ENCODE measurements at regions of chr1 and their contacts with region 1.

Region 1: GRCh38 chr1:207321079-207321789 is at the start of gene CD55:
- DNase-seq: peak; percentile 100
- ATAC-seq: peak; percentile 86
- H3K4me3 ChIP-seq: peak within 1 kb of the TSS; percentile 77
- H3K27ac ChIP-seq: peak within 1 kb of the TSS; percentile 88
- H3K4me1 ChIP-seq: peaks cover 41% of the 10 kb centered on the region
- H3K27me3 ChIP-seq: no peaks in the 10 kb centered on the region
- CTCF ChIP-seq: peak; percentile 72
- total RNA-seq, gene CD55: 101 and 108 TPM in 2 replicates

Region 2: DNA sequence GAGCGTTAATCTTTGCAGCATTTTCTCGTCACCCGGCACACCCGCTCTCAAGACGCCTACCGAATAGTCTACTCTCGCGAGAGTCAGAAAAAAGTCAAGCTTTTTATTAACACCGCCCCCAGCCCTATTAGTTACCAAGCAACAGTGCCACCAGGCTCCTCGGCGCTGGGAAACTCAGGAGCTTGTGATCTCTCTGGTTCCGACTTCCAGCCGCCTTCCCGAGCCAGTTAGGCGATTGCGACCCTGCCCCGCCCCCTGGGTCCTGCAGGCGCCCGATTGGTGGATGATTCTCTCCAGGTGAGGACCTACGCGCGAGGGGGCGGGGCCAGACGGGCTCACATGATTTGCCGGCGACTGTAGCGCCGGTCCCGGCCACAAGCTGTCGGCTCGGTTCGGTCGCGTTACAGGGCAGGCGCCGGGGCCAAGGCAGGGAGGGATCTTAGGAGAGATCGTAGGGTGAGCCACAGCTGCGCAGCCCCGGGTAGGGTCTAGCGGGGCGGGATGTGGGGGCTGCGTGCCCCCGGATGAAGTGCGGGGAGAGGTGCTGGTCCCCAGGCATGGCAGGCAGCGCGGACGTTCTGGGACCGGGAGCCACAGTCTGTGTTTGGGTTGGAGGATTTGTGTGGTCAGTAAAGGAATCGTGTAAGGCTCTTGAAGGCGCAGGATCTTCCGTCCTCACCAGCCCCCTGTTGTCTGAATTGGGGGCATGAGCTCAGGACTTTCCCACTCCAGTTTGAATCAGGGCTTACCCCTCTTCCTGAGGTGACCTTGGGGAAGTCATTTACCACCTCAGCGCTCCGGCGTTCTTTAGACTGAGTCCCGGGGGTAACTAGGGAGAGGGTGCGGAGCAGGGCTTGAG is 268.1 kb before region 1 on chr1 and contains the start of gene PFKFB2:
- CTCF ChIA-PET with region 1: no interaction called
- POLR2A ChIA-PET with region 1: interaction called, 11 read pairs
- intact Hi-C with region 1: no loop called
- DNase-seq: peak; percentile 100
- ATAC-seq: peak; percentile 81
- H3K4me3 ChIP-seq: peak within 1 kb of the TSS; percentile 78
- H3K27ac ChIP-seq: peak within 1 kb of the TSS; percentile 95
- H3K4me1 ChIP-seq: peaks cover 55% of the 10 kb centered on the region
- H3K27me3 ChIP-seq: no peaks in the 10 kb centered on the region
- CTCF ChIP-seq: peak; percentile 35; the same call in 1 of the 2 replicates
- total RNA-seq, gene PFKFB2: 37.5 and 48.6 TPM in 2 replicates

Region 3: DNA sequence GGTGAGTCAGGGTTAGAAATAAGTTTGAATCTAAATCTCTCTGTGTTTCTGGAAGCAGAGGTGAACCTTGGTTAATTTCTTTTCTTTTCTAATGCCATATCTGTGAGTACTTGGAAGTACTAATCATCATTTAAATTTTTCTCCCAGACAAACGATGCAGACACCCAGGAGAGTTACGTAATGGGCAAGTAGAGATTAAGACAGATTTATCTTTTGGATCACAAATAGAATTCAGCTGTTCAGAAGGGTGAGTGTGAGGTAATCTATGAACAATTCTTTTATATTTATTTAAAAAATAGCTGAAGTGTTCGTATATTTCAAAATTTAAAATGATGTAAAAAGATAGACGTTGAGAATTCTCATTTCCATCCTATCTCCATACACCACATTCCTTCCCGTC is 206.0 kb before region 1 on chr1:
- CTCF ChIA-PET with region 1: no interaction called
- POLR2A ChIA-PET with region 1: no interaction called
- intact Hi-C with region 1: no loop called
- DNase-seq: no peak
- ATAC-seq: no peak
- H3K4me3 ChIP-seq: no peak overlapping the region
- H3K27ac ChIP-seq: no peak overlapping the region
- H3K4me1 ChIP-seq: no peaks in the 10 kb centered on the region
- H3K27me3 ChIP-seq: peaks cover 3% of the 10 kb centered on the region; the same call in 1 of the 2 replicates
- CTCF ChIP-seq: no peak

Region 4: DNA sequence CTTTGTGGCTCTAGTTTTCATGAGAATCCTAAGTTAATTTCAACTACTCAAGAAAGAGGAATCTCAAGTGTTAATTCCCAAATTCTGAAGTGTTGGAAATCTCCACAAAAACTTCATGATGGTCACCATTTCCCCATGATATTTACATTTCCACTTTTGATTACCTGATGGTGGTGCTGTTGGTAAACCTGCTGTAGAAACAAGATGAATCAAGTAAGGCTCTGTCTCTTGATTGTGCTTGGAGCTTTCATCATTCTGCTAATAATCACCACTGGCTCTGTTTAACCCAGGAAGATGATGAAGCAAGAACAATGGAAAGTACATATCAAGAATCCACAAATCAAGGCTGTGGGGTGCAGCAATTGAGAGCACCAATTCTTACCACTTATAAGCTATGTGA is 139.4 kb before region 1 on chr1:
- CTCF ChIA-PET with region 1: interaction called, 3 read pairs
- POLR2A ChIA-PET with region 1: no interaction called
- intact Hi-C with region 1: loop called (anchors 1 kb)
- DNase-seq: peak; percentile 61
- ATAC-seq: peak; percentile 51
- H3K4me3 ChIP-seq: no peak overlapping the region
- H3K27ac ChIP-seq: no peak overlapping the region
- H3K4me1 ChIP-seq: no peaks in the 10 kb centered on the region
- H3K27me3 ChIP-seq: peaks cover 3% of the 10 kb centered on the region; the same call in 1 of the 2 replicates
- CTCF ChIP-seq: peak; percentile 82

Region 5: GRCh38 chr1:207259391-207259790 is 61.8 kb before region 1 on chr1:
- CTCF ChIA-PET with region 1: interaction called, 9 read pairs
- POLR2A ChIA-PET with region 1: no interaction called
- intact Hi-C with region 1: loop called (anchors 1 kb)
- DNase-seq: peak; percentile 86
- ATAC-seq: peak; percentile 84
- H3K4me3 ChIP-seq: no peak overlapping the region
- H3K27ac ChIP-seq: no peak overlapping the region
- H3K4me1 ChIP-seq: peaks cover 5% of the 10 kb centered on the region; the same call in 1 of the 2 replicates
- H3K27me3 ChIP-seq: no peaks in the 10 kb centered on the region
- CTCF ChIP-seq: peak; percentile 90

Region 6: DNA sequence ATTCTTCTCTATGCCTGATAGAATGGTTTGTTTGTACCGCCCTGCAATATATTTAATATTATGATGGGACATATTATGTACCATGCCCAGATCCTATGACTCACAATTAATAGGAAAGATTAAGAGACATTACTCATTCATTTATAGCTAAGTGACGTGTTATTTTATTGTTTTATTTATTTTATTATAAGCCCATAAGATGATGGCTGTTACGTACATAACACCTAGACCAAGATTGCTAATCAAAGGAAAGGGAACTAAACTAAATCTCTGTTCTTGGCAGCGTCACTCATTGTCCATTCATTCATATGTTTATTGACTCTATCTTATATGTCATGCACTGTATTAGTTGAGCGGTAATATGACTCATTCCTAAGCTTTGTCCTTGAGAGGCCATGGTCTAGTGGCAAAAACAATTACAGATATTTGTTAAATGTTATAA is 16.5 kb before region 1 on chr1:
- CTCF ChIA-PET with region 1: interaction called, 5 read pairs
- POLR2A ChIA-PET with region 1: interaction called, 10 read pairs
- intact Hi-C with region 1: loop called (anchors 1 kb)
- DNase-seq: peak; percentile 99
- ATAC-seq: peak; percentile 88
- H3K4me3 ChIP-seq: no peak overlapping the region
- H3K27ac ChIP-seq: peak overlapping the region; percentile 89
- H3K4me1 ChIP-seq: peaks cover 38% of the 10 kb centered on the region
- H3K27me3 ChIP-seq: no peaks in the 10 kb centered on the region
- CTCF ChIP-seq: no peak

Region 7: DNA sequence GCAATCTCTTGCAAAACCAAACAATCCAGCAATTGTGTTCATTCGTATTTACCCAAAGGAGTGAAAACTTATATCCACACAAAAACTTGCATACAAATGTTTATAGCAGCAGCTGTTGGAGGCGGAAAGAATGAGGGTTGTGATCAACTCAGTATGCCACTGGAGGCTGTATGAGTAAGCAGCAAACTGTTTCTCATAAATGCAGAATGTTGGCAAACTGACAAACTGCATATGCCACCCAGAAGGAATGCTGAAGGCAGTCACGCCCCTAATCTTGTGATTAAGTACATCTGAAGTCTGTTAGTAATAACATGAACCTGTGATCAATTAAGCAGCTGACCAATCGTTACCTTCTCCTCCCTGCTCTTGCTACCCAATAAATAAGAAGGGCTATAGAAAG is 72.4 kb after region 1 on chr1:
- CTCF ChIA-PET with region 1: interaction called, 9 read pairs
- POLR2A ChIA-PET with region 1: interaction called, 6 read pairs
- intact Hi-C with region 1: loop called (anchors 1 kb)
- DNase-seq: peak; percentile 100
- ATAC-seq: peak; percentile 74
- H3K4me3 ChIP-seq: peak overlapping the region; percentile 23; the same call in 1 of the 2 replicates
- H3K27ac ChIP-seq: peak overlapping the region; percentile 90
- H3K4me1 ChIP-seq: peaks cover 38% of the 10 kb centered on the region
- H3K27me3 ChIP-seq: no peaks in the 10 kb centered on the region
- CTCF ChIP-seq: no peak